Mammary epithelial cell (primary cell): ENCODE measurements at regions of chr15 and their contacts with region 1.

Region 1: GRCh38 chr15:47551079-47551478 is 166.2 kb upstream of the SEMA6D start:
- DNase-seq: no peak
- H3K4me3 ChIP-seq: no peak overlapping the region
- H3K27ac ChIP-seq: no peak overlapping the region
- H3K4me1 ChIP-seq: no peaks in the 10 kb centered on the region
- H3K27me3 ChIP-seq: no peaks in the 10 kb centered on the region
- CTCF ChIP-seq: no peak

Region 2: GRCh38 chr15:47561102-47561501 is 10.0 kb after region 1 on chr15:
- CTCF ChIA-PET with region 1: no interaction called
- dilution Hi-C with region 1: no loop called
- in situ Hi-C with region 1: no loop called
- intact Hi-C with region 1: loop called (anchors 1 kb)
- DNase-seq: no peak
- H3K4me3 ChIP-seq: no peak overlapping the region
- H3K27ac ChIP-seq: no peak overlapping the region
- H3K4me1 ChIP-seq: no peaks in the 10 kb centered on the region
- H3K27me3 ChIP-seq: no peaks in the 10 kb centered on the region
- CTCF ChIP-seq: no peak

Region 3: DNA sequence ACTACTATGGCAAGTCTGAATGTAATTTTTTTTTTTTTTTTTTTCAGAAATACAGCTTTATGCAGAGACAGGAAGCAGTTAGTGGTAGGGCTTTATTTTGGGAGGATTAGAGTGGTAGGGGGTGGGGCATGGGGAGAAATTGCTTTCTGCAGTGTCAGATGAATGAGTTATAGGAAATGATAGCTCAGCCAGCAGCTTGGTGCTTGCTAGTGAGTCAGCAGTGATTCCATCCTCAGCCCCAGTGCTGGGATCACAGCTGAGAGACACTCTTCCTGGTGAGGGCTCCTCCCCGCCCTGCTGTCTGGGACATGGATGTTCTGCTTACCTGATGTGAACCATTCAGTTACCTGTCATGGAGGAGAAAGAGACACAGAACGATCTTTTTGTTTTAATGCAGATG is 205.8 kb after region 1 on chr15:
- CTCF ChIA-PET with region 1: no interaction called
- dilution Hi-C with region 1: no loop called
- in situ Hi-C with region 1: no loop called
- intact Hi-C with region 1: no loop called
- DNase-seq: peak; percentile 76
- H3K4me3 ChIP-seq: no peak overlapping the region
- H3K27ac ChIP-seq: no peak overlapping the region
- H3K4me1 ChIP-seq: peaks cover 7% of the 10 kb centered on the region
- H3K27me3 ChIP-seq: no peaks in the 10 kb centered on the region
- CTCF ChIP-seq: no peak